SK-N-SH (cell line): ENCODE measurements at regions of chr6 and their contacts with region 1.

Region 1: DNA sequence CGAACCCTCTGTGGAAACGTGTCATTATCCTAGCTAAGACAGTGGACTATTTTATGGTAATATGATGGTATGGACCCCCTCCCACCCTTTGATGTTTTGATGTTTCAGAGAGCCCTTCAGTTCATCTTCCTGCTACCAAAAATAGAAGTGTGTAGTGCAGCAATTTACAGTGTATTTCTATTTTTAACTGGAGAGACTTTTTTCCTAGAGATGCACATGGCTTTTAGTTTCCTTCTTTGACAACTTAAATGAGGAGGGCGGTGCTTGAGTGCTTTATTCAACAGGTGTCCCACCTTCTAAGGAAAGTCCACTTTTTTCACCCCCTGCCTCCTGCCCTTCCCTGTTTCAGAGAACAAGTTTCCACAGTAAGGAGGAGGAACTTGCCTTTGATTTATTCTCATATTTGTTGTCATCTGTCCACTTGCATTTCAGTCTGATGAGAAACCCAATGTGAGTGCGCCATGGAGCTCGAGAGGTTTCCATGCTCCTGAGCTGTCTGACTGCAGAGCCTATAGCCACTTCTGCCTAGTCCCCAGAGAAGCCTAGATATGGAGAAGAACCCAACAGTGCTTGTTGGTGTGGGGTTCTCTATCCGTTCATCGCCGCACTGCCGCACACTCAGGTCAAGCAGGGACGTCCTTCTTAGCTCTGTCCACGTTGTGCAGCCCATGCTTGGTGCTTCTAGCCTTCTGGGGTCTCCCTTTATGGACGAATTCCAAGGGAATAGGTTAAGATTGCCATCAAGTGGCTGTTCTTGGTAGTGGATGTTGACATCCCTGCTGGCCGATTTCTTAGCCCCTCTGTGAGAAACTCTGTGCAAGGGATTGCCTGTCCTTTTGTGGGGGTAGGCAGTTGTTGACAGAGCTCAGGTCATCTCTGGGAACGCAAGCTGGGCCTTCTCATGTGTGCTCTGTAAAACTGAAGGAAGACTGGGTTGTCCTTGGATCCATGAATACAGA is 144.2 kb downstream of the JARID2 start:
- DNase-seq: peak; percentile 75
- H3K4me3 ChIP-seq: no peak overlapping the region; a peak in 1 of 4 replicates
- H3K27ac ChIP-seq: no peak overlapping the region
- H3K4me1 ChIP-seq: peaks cover 12 to 18% of the 10 kb centered on the region in 2 experiments; a peak in 2 of 4 replicates
- H3K27me3 ChIP-seq: no peaks in the 10 kb centered on the region
- CTCF ChIP-seq: peak; percentile 80
- EP300 ChIP-seq: no peak
- RAD21 ChIP-seq: peak; percentile 93

Region 2: GRCh38 chr6:14210663-14211561 is 1179.1 kb before region 1 on chr6:
- CTCF ChIA-PET with region 1: interaction called, 35 read pairs
- POLR2A ChIA-PET with region 1: no interaction called
- DNase-seq: peak; percentile 98
- H3K4me3 ChIP-seq: peak overlapping the region; percentile 83 to 92
- H3K27ac ChIP-seq: peak overlapping the region in 1 of 2 experiments; percentile 93; a peak in 2 of 4 replicates
- H3K4me1 ChIP-seq: peaks cover 0 to 16% of the 10 kb centered on the region in 2 experiments; a peak in 2 of 4 replicates
- H3K27me3 ChIP-seq: no peaks in the 10 kb centered on the region
- CTCF ChIP-seq: peak; percentile 55
- EP300 ChIP-seq: peak; percentile 53 to 91; a peak in 3 of 4 replicates
- RAD21 ChIP-seq: peak; percentile 84

Region 3: GRCh38 chr6:15336900-15337560 is 53.0 kb before region 1 on chr6:
- CTCF ChIA-PET with region 1: interaction called, 11 read pairs
- POLR2A ChIA-PET with region 1: no interaction called
- DNase-seq: peak; percentile 66
- H3K4me3 ChIP-seq: no peak overlapping the region
- H3K27ac ChIP-seq: no peak overlapping the region; a peak in 2 of 4 replicates
- H3K4me1 ChIP-seq: peaks cover 15 to 19% of the 10 kb centered on the region in 2 experiments; a peak in 3 of 4 replicates
- H3K27me3 ChIP-seq: no peaks in the 10 kb centered on the region
- CTCF ChIP-seq: no peak
- EP300 ChIP-seq: peak in 1 of 2 experiments; percentile 91; a peak in 2 of 4 replicates
- RAD21 ChIP-seq: peak; percentile 31; the same call in 1 of the 2 replicates

Region 4: GRCh38 chr6:15413466-15414234 is 23.6 kb after region 1 on chr6:
- CTCF ChIA-PET with region 1: no interaction called
- POLR2A ChIA-PET with region 1: no interaction called
- DNase-seq: no peak
- H3K4me3 ChIP-seq: no peak overlapping the region
- H3K27ac ChIP-seq: no peak overlapping the region
- H3K4me1 ChIP-seq: peaks cover 0 to 5% of the 10 kb centered on the region in 2 experiments; a peak in 2 of 4 replicates
- H3K27me3 ChIP-seq: no peaks in the 10 kb centered on the region
- CTCF ChIP-seq: no peak
- EP300 ChIP-seq: no peak
- RAD21 ChIP-seq: no peak